H1 (cell line): ENCODE measurements at regions of chr6 and their contacts with region 1.

Region 1: GRCh38 chr6:169800668-169801395 is 49.4 kb downstream of the ERMARD start:
- DNase-seq: peak in 1 of 2 experiments; percentile 44
- H3K4me3 ChIP-seq: no peak overlapping the region
- H3K27ac ChIP-seq: no peak overlapping the region
- H3K4me1 ChIP-seq: peaks cover 0 to 10% (median 2%) of the 10 kb centered on the region in 4 experiments; a peak in 4 of 7 replicates
- H3K27me3 ChIP-seq: peaks cover 0 to 2% (median 0%) of the 10 kb centered on the region in 4 experiments; a peak in 2 of 7 replicates
- CTCF ChIP-seq: no peak
- EP300 ChIP-seq: no peak
- POLR2A ChIP-seq: no peak
- RAD21 ChIP-seq: peak; percentile 18 to 20

Region 2: DNA sequence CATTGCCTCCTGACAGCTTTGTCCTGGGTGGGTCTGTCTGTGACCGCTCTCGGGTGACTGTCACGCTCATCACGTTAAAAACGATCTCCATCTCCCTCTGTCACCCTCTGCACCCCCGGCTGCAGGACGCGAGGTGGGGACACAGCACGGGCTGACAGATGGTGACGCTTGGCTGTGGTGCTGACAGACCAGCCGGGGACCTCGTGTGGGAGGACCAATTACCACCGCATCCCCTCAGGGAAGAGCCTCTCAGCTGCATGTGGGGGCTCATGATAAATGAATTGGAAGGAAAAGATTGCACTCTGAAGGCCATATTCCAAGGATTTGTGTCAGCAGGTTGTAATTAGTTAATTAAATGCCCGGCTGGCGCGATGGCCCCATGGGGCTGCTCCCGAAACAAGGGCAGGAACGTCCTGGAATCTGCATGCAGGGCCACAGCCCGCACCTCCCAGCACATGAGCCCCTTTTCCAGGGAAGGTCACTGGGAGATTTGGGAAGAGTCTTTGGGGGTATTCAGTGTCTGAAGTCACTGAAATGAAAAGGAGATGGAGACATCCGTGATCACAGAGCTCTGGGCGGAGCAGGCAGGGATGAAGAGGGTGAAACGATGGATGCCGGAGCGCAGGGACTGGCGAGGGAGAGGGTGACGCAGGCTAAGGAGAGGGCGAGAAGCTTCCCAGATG is 37.7 kb after region 1 on chr6:
- CTCF ChIA-PET with region 1: interaction called, 10 read pairs
- POLR2A ChIA-PET with region 1: no interaction called
- DNase-seq: peak in 1 of 2 experiments; percentile 39
- H3K4me3 ChIP-seq: no peak overlapping the region
- H3K27ac ChIP-seq: no peak overlapping the region
- H3K4me1 ChIP-seq: no peaks in the 10 kb centered on the region
- H3K27me3 ChIP-seq: no peaks in the 10 kb centered on the region
- CTCF ChIP-seq: no peak
- EP300 ChIP-seq: no peak
- POLR2A ChIP-seq: no peak
- RAD21 ChIP-seq: no peak